Activated CD4-positive, alpha-beta T cell treated with anti-CD3 and anti-CD28 coated beads, Interleukin-2, amount 10 ng/mL, durations not matched to agents 24 days and 14 days (primary cell): ENCODE measurements at regions of chr19 and their contacts with region 1.

Region 1: GRCh38 chr19:41310033-41310758 is at the start of gene CCDC97:
- DNase-seq: peak; percentile 97
- H3K4me3 Mint-ChIP-seq: peak within 1 kb of the TSS; percentile 99
- H3K27ac Mint-ChIP-seq: peak within 1 kb of the TSS; percentile 98
- H3K4me1 Mint-ChIP-seq: peaks cover 60% of the 10 kb centered on the region
- H3K27me3 Mint-ChIP-seq: no peaks in the 10 kb centered on the region
- total RNA-seq, gene CCDC97: 30.4 and 30.7 TPM in 2 replicates

Region 2: GRCh38 chr19:41123716-41124294 is 186.4 kb before region 1 on chr19:
- intact Hi-C with region 1: loop called (anchors 2 kb)
- DNase-seq: no peak
- H3K4me3 Mint-ChIP-seq: no peak overlapping the region
- H3K27ac Mint-ChIP-seq: no peak overlapping the region
- H3K4me1 Mint-ChIP-seq: peaks cover 30% of the 10 kb centered on the region
- H3K27me3 Mint-ChIP-seq: peaks cover 15% of the 10 kb centered on the region

Region 3: GRCh38 chr19:41206926-41207750 is 103.1 kb before region 1 on chr19:
- intact Hi-C with region 1: loop called (anchors 1 kb)
- DNase-seq: no peak
- H3K4me3 Mint-ChIP-seq: no peak overlapping the region
- H3K27ac Mint-ChIP-seq: peak overlapping the region; percentile 35
- H3K4me1 Mint-ChIP-seq: peaks cover 14% of the 10 kb centered on the region
- H3K27me3 Mint-ChIP-seq: no peaks in the 10 kb centered on the region

Region 4: GRCh38 chr19:41297628-41298347 is 12.4 kb before region 1 on chr19:
- intact Hi-C with region 1: loop called (anchors 2 kb)
- DNase-seq: no peak
- H3K4me3 Mint-ChIP-seq: no peak overlapping the region
- H3K27ac Mint-ChIP-seq: peak overlapping the region; percentile 77
- H3K4me1 Mint-ChIP-seq: peaks cover 64% of the 10 kb centered on the region
- H3K27me3 Mint-ChIP-seq: no peaks in the 10 kb centered on the region

Region 5: DNA sequence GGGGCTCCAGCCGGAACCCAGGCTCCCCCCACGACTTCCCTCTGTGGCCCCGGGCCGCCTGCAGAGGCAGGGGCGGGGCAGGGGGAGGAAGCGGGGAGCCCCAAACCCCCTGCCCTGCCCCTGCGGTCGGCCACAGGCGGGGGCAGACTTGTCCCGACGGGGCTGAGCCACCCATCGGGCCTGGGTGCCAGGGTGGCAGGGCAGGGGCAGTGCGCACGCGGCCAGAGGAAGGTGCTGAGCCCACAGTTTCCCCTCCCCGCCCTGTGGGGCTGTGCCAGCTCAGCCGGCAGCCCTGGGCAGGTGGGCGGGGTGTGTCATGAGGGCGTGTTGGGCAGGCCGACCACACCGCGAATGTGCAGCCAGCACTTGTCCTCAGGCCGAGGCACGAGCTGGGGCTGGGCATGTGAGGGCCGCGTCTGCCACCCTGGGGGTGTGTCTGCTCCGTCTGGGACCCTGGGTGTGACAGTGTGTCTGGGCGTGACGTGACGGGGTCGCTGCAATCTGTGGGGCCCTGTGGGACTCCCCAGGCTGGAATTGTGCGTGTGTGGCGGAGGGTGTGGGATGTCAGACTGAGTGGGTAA is 17.5 kb after region 1 on chr19:
- intact Hi-C with region 1: loop called (anchors 1 kb)
- DNase-seq: peak; percentile 90
- H3K4me3 Mint-ChIP-seq: peak overlapping the region; percentile 91
- H3K27ac Mint-ChIP-seq: peak overlapping the region; percentile 98
- H3K4me1 Mint-ChIP-seq: peaks cover 64% of the 10 kb centered on the region
- H3K27me3 Mint-ChIP-seq: no peaks in the 10 kb centered on the region